Sciatic nerve (tissue), 2 donors: ENCODE measurements at regions of chr20 and their contacts with region 1.

Region 1: GRCh38 chr20:45311589-45312211 is 3.6 kb upstream of the MATN4 start:
- DNase-seq: peak; percentile 78
- ATAC-seq: peak; percentile 81

Region 2: DNA sequence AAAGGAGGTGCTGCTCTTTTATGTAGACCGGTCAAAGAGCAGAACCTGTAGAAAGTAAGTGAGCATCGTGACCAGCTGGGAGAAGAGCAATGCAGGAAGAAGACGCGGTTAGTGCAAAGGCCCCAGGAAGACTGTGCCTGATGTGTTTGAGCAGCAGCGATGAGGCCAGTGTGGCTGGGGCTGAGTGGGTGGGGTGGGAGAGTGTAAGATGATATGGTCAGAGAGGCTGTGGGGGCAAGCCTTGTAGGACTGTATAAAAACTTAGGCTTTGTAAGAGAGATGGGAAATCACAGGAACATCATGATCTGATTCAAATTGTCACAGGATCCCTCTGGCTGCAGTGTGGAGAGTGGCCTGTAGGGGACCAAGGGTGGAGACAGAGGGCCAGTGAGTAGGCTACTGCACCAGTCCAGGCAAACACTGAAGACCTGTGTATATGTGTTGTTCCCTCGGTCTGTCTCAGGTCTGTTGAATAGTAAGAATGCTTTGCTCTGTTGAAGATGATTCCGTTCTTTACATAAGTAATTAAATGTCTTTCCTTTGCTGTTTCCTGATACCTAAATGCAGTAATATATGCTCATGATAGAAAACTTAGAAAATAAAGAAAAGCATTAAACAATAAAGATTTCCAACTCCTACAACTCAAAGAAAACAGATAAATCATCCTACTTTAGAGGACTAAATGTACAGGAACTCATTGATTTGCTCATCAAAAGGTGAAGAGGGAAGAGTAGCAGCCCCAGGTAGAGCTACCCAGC is 134.3 kb after region 1 on chr20:
- intact Hi-C with region 1: loop called (anchors 10 kb)
- DNase-seq: no peak
- ATAC-seq: no peak

Region 3: DNA sequence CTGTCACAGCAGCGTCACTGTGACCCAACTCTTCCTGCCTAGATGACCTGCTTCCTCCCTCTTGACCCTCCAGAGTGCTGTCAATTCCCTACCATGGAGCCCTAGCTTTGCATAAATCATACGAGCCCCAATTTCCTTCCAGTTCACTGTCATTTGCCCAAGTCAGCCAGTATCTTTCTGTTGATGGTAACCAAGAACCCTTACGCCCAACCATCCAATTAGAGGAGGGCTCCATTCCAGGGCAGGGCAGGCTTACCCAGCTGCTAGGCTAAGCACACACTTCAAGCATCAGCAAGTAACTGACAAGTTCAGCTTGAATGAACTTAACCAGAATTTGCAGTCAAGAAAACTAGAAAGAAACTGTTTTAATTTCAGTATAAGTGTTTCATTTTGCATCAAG is 454.3 kb after region 1 on chr20:
- intact Hi-C with region 1: loop called (anchors 10 kb)
- DNase-seq: no peak
- ATAC-seq: no peak